A673 (cell line): ENCODE measurements at regions of chr17 and their contacts with region 1.

Region 1: DNA sequence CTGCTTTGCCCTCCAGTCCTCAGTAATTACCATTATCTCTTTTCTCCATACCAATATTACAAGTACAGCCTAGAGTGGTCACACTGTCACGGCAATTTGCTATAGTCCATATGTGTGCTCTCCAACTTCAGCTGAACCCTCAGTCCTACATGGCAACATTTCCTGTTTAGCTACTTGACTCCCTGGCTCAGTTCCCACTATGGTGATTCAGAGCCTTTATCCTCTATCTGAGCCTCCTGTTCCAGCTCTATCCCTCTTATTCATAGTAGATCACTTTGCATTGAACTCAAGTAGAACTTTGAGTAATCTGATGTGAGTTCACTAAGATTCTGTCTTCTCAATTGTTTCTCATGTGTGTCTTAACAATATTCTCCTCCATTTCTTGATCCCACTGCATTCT is 43.7 kb upstream of the GOSR1 start:
- DNase-seq: peak; percentile 89
- H3K4me3 ChIP-seq: no peak overlapping the region
- H3K27ac ChIP-seq: no peak overlapping the region
- H3K4me1 ChIP-seq: peaks cover 12% of the 10 kb centered on the region
- H3K27me3 ChIP-seq: no peaks in the 10 kb centered on the region
- CTCF ChIP-seq: no peak

Region 2: DNA sequence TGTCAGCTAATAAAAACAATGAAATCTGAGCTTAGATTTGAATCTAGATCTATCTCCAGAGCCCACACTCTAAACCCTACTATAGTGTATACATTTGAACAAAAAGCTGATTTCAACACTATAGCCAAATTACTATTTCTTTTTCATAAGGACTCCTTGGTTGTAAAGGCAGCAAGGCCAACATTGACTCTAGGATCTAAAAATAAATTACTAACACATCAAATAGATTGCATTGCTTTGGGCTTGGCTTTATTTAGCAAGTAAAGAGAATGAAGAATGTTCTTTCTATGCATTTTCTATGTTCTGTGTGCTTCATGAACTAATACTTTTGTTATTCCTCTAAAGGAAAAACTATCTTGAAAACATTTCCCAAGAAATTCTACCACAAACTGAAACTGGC is 49.0 kb after region 1 on chr17:
- CTCF ChIA-PET with region 1: no interaction called
- POLR2A ChIA-PET with region 1: no interaction called
- intact Hi-C with region 1: no loop called
- DNase-seq: no peak
- H3K4me3 ChIP-seq: no peak overlapping the region
- H3K27ac ChIP-seq: no peak overlapping the region
- H3K4me1 ChIP-seq: no peaks in the 10 kb centered on the region
- H3K27me3 ChIP-seq: no peaks in the 10 kb centered on the region
- CTCF ChIP-seq: no peak

Region 3: GRCh38 chr17:30495586-30495985 is 62.1 kb after region 1 on chr17:
- CTCF ChIA-PET with region 1: no interaction called
- POLR2A ChIA-PET with region 1: no interaction called
- intact Hi-C with region 1: loop called (anchors 10 kb)
- DNase-seq: peak; percentile 14
- H3K4me3 ChIP-seq: no peak overlapping the region
- H3K27ac ChIP-seq: no peak overlapping the region
- H3K4me1 ChIP-seq: peaks cover 4% of the 10 kb centered on the region
- H3K27me3 ChIP-seq: no peaks in the 10 kb centered on the region
- CTCF ChIP-seq: no peak